CD8-positive, alpha-beta T cell (primary cell): ENCODE measurements at regions of chr5 and their contacts with region 1.

Region 1: DNA sequence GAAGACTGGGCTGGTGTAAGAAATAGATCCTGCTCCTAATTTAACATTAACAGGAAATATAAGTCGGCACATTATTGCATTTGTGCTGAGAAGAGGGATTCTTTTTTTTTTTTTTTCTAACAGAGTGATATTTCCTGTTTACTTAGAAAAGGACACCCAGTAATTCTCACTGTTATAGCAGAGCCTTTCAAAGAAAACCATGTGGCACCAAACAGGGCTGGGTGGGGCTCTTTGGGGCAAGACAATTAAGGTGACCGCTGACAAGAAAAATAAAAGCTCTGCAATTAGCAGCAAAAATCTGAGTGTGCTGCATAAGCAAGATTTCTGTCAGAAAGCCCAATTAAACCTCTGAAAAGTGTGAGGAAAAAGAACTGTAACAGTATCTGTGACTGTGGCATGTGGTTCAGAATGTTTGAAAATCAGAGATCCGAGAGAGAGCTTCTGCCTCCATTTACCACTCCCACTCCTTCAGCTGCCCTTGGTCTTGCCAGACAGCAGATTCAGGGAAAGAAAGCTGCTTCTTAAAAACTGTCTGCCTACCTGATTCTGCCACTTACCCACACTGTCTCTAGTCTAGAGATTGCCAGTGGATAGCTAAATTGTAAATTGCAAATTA is 77.1 kb upstream of the IQGAP2 start:
- DNase-seq: peak in 8 of 9 experiments; percentile 27 to 75 (median 42)
- ATAC-seq: peak; percentile 90
- H3K4me3 ChIP-seq: peak overlapping the region in 1 of 2 experiments; percentile 15
- H3K4me3 Mint-ChIP-seq: peak overlapping the region; percentile 73
- H3K27ac ChIP-seq: peak overlapping the region; percentile 39 to 78
- H3K27ac Mint-ChIP-seq: peak overlapping the region; percentile 95
- H3K4me1 ChIP-seq: peaks cover 39% of the 10 kb centered on the region
- H3K4me1 Mint-ChIP-seq: peaks cover 57% of the 10 kb centered on the region
- H3K27me3 ChIP-seq: no peaks in the 10 kb centered on the region
- H3K27me3 Mint-ChIP-seq: no peaks in the 10 kb centered on the region
- CTCF ChIP-seq: no peak

Region 2: GRCh38 chr5:75717082-75717922 is 608.7 kb before region 1 on chr5 and contains the start of gene POC5:
- CTCF ChIA-PET with region 1: no interaction called
- POLR2A ChIA-PET with region 1: no interaction called
- intact Hi-C with region 1: loop called in 1 of 2 experiments (anchors 10 kb)
- DNase-seq: peak; percentile 96 to 99 (median 98)
- ATAC-seq: peak; percentile 95
- H3K4me3 ChIP-seq: peak within 1 kb of the TSS; percentile 82 to 93
- H3K4me3 Mint-ChIP-seq: peak within 1 kb of the TSS; percentile 100
- H3K27ac ChIP-seq: peak within 1 kb of the TSS; percentile 69 to 88
- H3K27ac Mint-ChIP-seq: peak within 1 kb of the TSS; percentile 98
- H3K4me1 ChIP-seq: peaks cover 11% of the 10 kb centered on the region
- H3K4me1 Mint-ChIP-seq: peaks cover 39% of the 10 kb centered on the region
- H3K27me3 ChIP-seq: no peaks in the 10 kb centered on the region
- H3K27me3 Mint-ChIP-seq: no peaks in the 10 kb centered on the region
- CTCF ChIP-seq: no peak
- total RNA-seq, gene POC5: 6.5 to 7.9 TPM

Region 3: GRCh38 chr5:76337953-76338451 is 12.0 kb after region 1 on chr5:
- CTCF ChIA-PET with region 1: interaction called, 13 read pairs
- POLR2A ChIA-PET with region 1: interaction called, 7 read pairs
- intact Hi-C with region 1: no loop called
- DNase-seq: peak in 8 of 9 experiments; percentile 14 to 77 (median 40)
- ATAC-seq: peak; percentile 84
- H3K4me3 ChIP-seq: no peak overlapping the region
- H3K4me3 Mint-ChIP-seq: no peak overlapping the region
- H3K27ac ChIP-seq: no peak overlapping the region
- H3K27ac Mint-ChIP-seq: no peak overlapping the region
- H3K4me1 ChIP-seq: peaks cover 20% of the 10 kb centered on the region
- H3K4me1 Mint-ChIP-seq: peaks cover 28% of the 10 kb centered on the region
- H3K27me3 ChIP-seq: no peaks in the 10 kb centered on the region
- H3K27me3 Mint-ChIP-seq: no peaks in the 10 kb centered on the region
- CTCF ChIP-seq: peak; percentile 35

Region 4: DNA sequence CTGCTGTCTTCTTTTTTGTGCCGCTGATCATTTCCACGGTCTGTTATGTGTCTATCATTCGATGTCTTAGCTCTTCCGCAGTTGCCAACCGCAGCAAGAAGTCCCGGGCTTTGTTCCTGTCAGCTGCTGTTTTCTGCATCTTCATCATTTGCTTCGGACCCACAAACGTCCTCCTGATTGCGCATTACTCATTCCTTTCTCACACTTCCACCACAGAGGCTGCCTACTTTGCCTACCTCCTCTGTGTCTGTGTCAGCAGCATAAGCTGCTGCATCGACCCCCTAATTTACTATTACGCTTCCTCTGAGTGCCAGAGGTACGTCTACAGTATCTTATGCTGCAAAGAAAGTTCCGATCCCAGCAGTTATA is 407.0 kb after region 1 on chr5:
- CTCF ChIA-PET with region 1: no interaction called
- POLR2A ChIA-PET with region 1: no interaction called
- intact Hi-C with region 1: loop called in 1 of 2 experiments (anchors 10 kb)
- DNase-seq: peak in 6 of 9 experiments; percentile 42 to 94 (median 75)
- ATAC-seq: peak; percentile 81
- H3K4me3 ChIP-seq: peak overlapping the region in 1 of 2 experiments; percentile 27
- H3K4me3 Mint-ChIP-seq: peak overlapping the region; percentile 68
- H3K27ac ChIP-seq: peak overlapping the region; percentile 65 to 82
- H3K27ac Mint-ChIP-seq: peak overlapping the region; percentile 92
- H3K4me1 ChIP-seq: peaks cover 14% of the 10 kb centered on the region
- H3K4me1 Mint-ChIP-seq: peaks cover 37% of the 10 kb centered on the region
- H3K27me3 ChIP-seq: no peaks in the 10 kb centered on the region
- H3K27me3 Mint-ChIP-seq: no peaks in the 10 kb centered on the region
- CTCF ChIP-seq: no peak

Region 5: GRCh38 chr5:76766746-76767145 is 440.8 kb after region 1 on chr5:
- CTCF ChIA-PET with region 1: no interaction called
- POLR2A ChIA-PET with region 1: no interaction called
- intact Hi-C with region 1: no loop called
- DNase-seq: no peak
- ATAC-seq: no peak
- H3K4me3 ChIP-seq: no peak overlapping the region
- H3K4me3 Mint-ChIP-seq: no peak overlapping the region
- H3K27ac ChIP-seq: no peak overlapping the region
- H3K27ac Mint-ChIP-seq: no peak overlapping the region
- H3K4me1 ChIP-seq: no peaks in the 10 kb centered on the region
- H3K4me1 Mint-ChIP-seq: peaks cover 5% of the 10 kb centered on the region
- H3K27me3 ChIP-seq: no peaks in the 10 kb centered on the region
- H3K27me3 Mint-ChIP-seq: no peaks in the 10 kb centered on the region
- CTCF ChIP-seq: no peak

Region 6: DNA sequence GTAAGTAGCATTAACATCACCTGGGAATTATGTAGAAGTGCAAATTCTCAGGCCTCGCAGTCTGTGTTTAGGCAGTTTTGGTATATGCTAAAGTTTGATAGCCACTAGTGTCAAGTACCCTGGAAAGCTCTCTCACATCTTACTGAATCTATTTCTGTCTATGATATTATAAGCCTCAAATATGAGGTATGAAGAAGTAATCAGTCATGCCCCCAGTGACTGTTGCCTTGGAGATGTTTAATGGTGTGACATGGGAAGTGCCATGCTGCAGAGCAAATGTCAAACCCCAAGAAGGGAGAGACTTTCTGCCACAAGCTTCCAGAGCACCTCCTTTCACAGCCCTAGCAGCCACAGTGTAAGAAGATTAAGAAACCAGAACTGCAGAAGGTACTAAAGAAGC is 874.7 kb after region 1 on chr5:
- CTCF ChIA-PET with region 1: no interaction called
- POLR2A ChIA-PET with region 1: no interaction called
- intact Hi-C with region 1: no loop called
- DNase-seq: no peak
- ATAC-seq: no peak
- H3K4me3 ChIP-seq: no peak overlapping the region
- H3K4me3 Mint-ChIP-seq: no peak overlapping the region
- H3K27ac ChIP-seq: no peak overlapping the region
- H3K27ac Mint-ChIP-seq: no peak overlapping the region
- H3K4me1 ChIP-seq: no peaks in the 10 kb centered on the region
- H3K4me1 Mint-ChIP-seq: peaks cover 2% of the 10 kb centered on the region
- H3K27me3 ChIP-seq: peaks cover 0 to 3% of the 10 kb centered on the region in 2 experiments
- H3K27me3 Mint-ChIP-seq: peaks cover 5% of the 10 kb centered on the region
- CTCF ChIP-seq: no peak